Right ventricle myocardium inferior (tissue), 1 donor: ENCODE measurements at regions of chr9 and their contacts with region 1.

Region 1: GRCh38 chr9:99140685-99141314 is 35.9 kb downstream of the TGFBR1 start:
- DNase-seq: no peak
- ATAC-seq: peak; percentile 85

Region 2: DNA sequence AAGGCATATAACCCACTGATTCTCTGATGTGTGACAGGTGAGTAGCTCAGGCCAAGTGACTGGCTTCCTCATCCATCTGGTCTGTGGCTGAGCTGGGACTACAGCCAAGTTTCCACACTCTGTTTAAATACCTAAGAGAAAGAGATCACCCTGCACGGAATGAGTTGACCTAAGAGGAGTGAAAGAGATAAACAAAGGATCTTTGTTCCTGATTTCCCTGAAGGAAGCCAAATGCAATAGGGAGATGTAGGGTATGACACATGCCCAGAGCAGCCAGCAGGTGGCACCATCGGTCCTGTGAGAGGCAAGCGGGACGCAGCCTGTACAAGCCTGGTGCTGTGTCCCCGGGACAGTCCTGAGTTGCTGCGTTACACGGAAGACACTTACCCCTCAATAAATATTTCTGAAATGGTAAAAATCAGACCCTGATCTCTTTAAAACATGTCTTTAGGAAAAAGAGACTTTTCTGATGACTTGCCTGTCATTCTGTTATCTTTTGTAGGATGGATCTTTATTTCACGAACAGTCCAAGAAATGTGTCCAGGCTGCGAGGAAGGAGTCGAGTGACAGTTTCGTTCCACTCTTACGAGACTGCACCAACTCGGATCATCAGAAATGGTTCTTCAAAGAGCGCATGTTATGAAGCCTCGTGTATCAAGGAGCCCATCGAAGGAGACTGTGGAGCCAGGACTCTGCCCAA is 292.2 kb before region 1 on chr9:
- intact Hi-C with region 1: loop called (anchors 1 kb)
- DNase-seq: peak; percentile 96
- ATAC-seq: peak; percentile 98

Region 3: DNA sequence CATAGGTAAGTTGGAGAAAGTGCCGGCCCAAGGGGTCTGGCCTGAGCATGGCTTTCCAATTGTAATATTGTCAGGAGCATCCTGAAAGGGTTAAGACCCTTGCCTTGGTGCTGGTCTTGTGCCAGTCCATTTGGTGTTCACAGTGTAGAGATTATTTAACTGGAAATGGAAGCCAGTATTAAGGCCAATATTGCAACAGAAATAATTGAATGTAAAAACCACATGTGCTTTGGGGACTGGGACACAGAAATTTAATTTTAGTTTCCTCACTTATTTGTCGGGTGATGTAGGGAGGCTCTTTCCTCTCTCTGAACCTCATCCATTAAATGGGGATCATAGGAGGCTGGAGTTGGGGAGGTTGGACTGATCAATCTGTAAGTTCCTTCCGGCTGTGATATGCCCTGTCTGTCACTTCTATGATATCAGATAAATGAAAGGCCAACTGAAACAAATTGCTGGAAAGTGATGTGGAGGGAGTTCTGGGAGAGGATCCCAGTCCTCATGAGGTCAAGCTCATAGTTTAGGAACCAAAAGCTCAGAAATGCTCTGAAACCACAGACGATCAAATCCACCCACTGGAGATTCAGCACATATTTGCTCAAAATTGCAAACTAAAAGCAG is 251.9 kb before region 1 on chr9:
- intact Hi-C with region 1: no loop called
- DNase-seq: no peak
- ATAC-seq: peak; percentile 67

Region 4: DNA sequence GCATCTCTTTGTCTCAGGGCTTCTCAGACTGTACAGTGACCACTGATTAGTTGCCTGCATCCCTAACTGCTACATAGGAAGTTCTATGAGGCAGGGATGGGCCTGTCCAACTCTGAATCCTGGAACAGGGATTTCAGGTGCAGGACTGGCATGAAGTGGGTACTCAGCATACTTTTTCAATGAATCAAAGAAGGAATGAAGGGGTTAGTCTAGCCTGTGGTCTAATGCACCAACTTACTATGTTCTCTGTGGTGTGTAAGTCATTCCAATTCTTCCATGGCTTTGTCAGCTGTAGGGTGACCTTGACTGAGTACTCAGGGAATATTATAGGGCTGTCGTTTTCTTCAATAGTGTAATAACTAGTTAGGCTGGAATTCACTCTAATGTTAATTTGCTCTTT is 188.8 kb before region 1 on chr9:
- intact Hi-C with region 1: no loop called
- DNase-seq: no peak
- ATAC-seq: no peak

Region 5: DNA sequence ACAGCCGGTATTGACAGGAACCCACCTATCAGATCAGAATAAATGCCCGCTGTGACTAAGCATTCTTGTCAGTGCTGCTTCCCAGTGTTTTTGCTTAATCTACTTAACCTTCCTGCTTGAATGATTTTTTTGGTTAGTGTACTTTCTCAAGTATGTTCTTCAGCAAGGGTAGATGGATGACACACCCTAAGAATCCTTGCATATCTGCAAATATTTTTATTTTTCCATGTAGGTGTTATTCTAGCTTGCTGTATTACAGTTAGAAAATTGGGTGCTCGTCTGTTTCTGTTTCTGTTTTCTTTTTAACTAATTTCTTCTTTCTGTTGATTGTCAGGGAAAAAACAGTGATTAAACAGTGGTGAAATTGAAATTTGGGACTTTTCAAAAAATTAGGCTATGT is 145.7 kb after region 1 on chr9:
- intact Hi-C with region 1: no loop called
- DNase-seq: no peak
- ATAC-seq: no peak